ENCODE measurements at regions of chr2 and their contacts with region 1.

Region 1: GRCh38 chr2:985317-985898 is 34.8 kb downstream of the SNTG2 start:
- DNase-seq: peak in 6 of 9 donors; percentile 6 to 36 (median 28)
- ATAC-seq: peak; percentile 48
- H3K4me3 ChIP-seq: no peak overlapping the region
- H3K4me3 Mint-ChIP-seq: peak overlapping the region in 9 of 10 donors; percentile 43 to 74 (median 56)
- H3K27ac ChIP-seq: no peak overlapping the region
- H3K27ac Mint-ChIP-seq: peak overlapping the region in 7 of 9 donors; percentile 14 to 80 (median 71)
- H3K4me1 ChIP-seq: no peaks in the 10 kb centered on the region
- H3K4me1 Mint-ChIP-seq: peaks cover 0 to 21% (median 15%) of the 10 kb centered on the region in 7 donors
- H3K27me3 ChIP-seq: no peaks in the 10 kb centered on the region
- H3K27me3 Mint-ChIP-seq: peaks cover 0 to 14% (median 9%) of the 10 kb centered on the region in 5 donors

Region 2: DNA sequence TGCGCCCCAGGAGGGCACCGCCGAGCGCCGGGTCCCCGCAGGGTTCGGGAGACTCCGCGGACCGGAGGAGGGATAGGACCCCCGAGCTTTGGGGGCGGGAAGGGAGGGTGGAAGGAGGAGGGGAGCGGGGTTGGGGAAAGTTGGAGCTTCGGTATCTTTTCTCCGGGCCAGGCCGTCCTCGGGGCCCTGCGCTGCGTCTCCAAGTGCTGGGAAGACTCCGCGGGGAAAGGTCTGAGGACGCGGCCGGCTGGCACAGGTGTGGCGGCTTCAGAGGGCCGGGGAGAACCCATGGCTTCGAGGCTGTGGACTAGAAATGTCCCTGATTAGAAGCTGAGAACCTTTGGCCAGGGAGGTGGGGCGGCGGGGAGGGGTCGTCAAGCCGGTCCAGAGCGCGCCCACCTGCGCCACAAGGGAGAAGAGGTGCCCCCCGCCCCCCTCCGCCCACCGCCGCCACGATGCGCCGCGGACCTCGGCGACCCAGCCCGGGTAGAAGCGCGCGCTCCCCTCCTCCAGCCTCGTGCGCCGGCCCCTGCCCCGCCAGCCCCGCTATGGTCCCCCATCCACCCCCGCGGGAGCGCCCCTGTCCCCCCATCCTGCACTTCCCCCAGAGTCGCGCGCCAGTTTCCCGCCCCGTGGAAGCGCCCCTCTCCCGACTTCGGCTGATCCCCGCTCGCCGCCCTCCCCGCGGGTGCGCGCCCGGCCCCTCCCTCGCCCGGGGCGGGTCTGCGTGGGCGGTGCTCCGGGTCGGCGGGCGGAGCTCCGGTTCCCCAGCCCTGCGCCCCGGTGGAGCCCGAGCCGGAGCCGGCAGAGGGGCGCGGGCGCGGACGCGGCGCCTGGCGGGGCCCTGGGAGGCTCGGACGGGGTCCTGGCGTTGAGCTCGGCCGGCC is 35.1 kb before region 1 on chr2 and contains the start of gene SNTG2:
- CTCF ChIA-PET with region 1: interaction called, 3 read pairs
- POLR2A ChIA-PET with region 1: interaction called, 4 read pairs
- intact Hi-C with region 1: loop called in 1 of 2 experiments (anchors 5 kb)
- DNase-seq: peak; percentile 11 to 75 (median 53)
- ATAC-seq: peak; percentile 91
- H3K4me3 ChIP-seq: no peak within 1 kb of the TSS
- H3K4me3 Mint-ChIP-seq: peak within 1 kb of the TSS; percentile 68 to 89 (median 84)
- H3K27ac ChIP-seq: no peak within 1 kb of the TSS
- H3K27ac Mint-ChIP-seq: peak within 1 kb of the TSS in 3 of 9 donors; percentile 45 to 75 (median 62)
- H3K4me1 ChIP-seq: peaks cover 0 to 6% of the 10 kb centered on the region in 2 donors
- H3K4me1 Mint-ChIP-seq: peaks cover 13 to 38% (median 26%) of the 10 kb centered on the region in 7 donors
- H3K27me3 ChIP-seq: peaks cover 0 to 5% of the 10 kb centered on the region in 2 donors
- H3K27me3 Mint-ChIP-seq: peaks cover 26 to 48% (median 40%) of the 10 kb centered on the region in 5 donors
- total RNA-seq, gene SNTG2: 2.5 to 4.9 (median 3.6) TPM in 4 of 5 experiments, not detected in the other

Region 3: DNA sequence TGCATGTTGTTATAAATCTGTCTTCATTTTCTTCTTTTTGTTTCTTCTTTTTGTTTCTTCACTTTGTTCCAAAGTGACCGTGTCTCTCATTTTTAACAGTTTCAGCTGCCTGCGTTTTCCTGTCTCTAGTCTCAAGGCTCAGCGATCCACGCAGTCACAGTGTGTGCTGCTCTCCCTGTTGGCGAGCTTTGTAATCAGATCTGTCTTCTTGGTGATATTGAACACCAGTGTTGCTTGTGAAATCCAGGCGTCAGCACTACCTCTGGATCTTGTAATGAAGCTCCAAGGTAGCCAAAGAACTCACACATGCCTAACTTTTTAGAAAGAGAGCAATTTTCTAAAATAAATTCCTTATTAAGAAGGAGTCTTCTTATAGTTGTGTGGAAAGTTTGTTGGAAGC is 21.5 kb before region 1 on chr2:
- CTCF ChIA-PET with region 1: no interaction called
- POLR2A ChIA-PET with region 1: no interaction called
- intact Hi-C with region 1: no loop called
- DNase-seq: no peak
- ATAC-seq: no peak
- H3K4me3 ChIP-seq: no peak overlapping the region
- H3K4me3 Mint-ChIP-seq: no peak overlapping the region
- H3K27ac ChIP-seq: no peak overlapping the region
- H3K27ac Mint-ChIP-seq: no peak overlapping the region
- H3K4me1 ChIP-seq: no peaks in the 10 kb centered on the region
- H3K4me1 Mint-ChIP-seq: peaks cover 0 to 9% (median 0%) of the 10 kb centered on the region in 7 donors
- H3K27me3 ChIP-seq: no peaks in the 10 kb centered on the region
- H3K27me3 Mint-ChIP-seq: peaks cover 0 to 28% (median 5%) of the 10 kb centered on the region in 5 donors

Region 4: DNA sequence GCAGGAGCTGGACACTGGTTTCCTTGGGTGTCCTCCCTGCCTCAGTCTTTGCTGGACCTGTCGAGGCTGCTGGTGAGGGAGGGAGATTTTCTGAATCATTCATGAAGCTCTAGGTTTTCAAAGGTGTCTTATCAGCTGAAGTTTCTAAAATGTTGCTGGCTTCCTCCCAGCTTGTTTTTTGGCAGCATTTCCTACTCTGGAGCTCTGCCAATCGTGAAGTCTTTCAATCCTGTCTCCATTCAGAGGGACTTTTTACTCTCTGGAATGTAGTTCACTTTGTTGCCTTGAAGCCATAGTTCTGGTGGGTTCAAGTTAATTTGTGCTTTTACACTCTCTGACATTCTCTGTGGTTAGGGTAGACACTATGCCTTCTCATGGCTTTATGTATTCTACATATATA is 10.9 kb before region 1 on chr2:
- CTCF ChIA-PET with region 1: interaction called, 3 read pairs
- POLR2A ChIA-PET with region 1: interaction called, 16 read pairs
- intact Hi-C with region 1: no loop called
- DNase-seq: peak in 3 of 9 donors; percentile 16 to 27 (median 17)
- ATAC-seq: peak; percentile 20
- H3K4me3 ChIP-seq: no peak overlapping the region
- H3K4me3 Mint-ChIP-seq: peak overlapping the region; percentile 51 to 83 (median 70)
- H3K27ac ChIP-seq: no peak overlapping the region
- H3K27ac Mint-ChIP-seq: peak overlapping the region; percentile 50 to 92 (median 69)
- H3K4me1 ChIP-seq: peaks cover 5 to 18% of the 10 kb centered on the region in 2 donors
- H3K4me1 Mint-ChIP-seq: peaks cover 19 to 53% (median 37%) of the 10 kb centered on the region in 7 donors
- H3K27me3 ChIP-seq: no peaks in the 10 kb centered on the region
- H3K27me3 Mint-ChIP-seq: peaks cover 0 to 24% (median 13%) of the 10 kb centered on the region in 5 donors